Dendritic cell treated with granulocyte-macrophage colony-stimulating factor and Interleukin-4, amounts not matched to agents 40 ng/mL and 50 ng/mL, for 4 days (primary cell): ENCODE measurements at regions of chr14 and their contacts with region 1.

Region 1: GRCh38 chr14:45083971-45084722 is at the start of gene PRPF39:
- H3K4me3 Mint-ChIP-seq: peak within 1 kb of the TSS; percentile 97
- H3K27ac Mint-ChIP-seq: peak within 1 kb of the TSS; percentile 96
- H3K4me1 Mint-ChIP-seq: peaks cover 39% of the 10 kb centered on the region
- H3K27me3 Mint-ChIP-seq: peaks cover 9% of the 10 kb centered on the region

Region 2: GRCh38 chr14:44897045-44897844 is 186.9 kb before region 1 on chr14:
- intact Hi-C with region 1: loop called (anchors 1 kb)
- H3K4me3 Mint-ChIP-seq: peak overlapping the region; percentile 93
- H3K27ac Mint-ChIP-seq: peak overlapping the region; percentile 93
- H3K4me1 Mint-ChIP-seq: peaks cover 14% of the 10 kb centered on the region
- H3K27me3 Mint-ChIP-seq: no peaks in the 10 kb centered on the region

Region 3: GRCh38 chr14:45112889-45113781 is 29.0 kb after region 1 on chr14:
- intact Hi-C with region 1: no loop called
- H3K4me3 Mint-ChIP-seq: no peak overlapping the region
- H3K27ac Mint-ChIP-seq: no peak overlapping the region
- H3K4me1 Mint-ChIP-seq: no peaks in the 10 kb centered on the region
- H3K27me3 Mint-ChIP-seq: no peaks in the 10 kb centered on the region

Region 4: DNA sequence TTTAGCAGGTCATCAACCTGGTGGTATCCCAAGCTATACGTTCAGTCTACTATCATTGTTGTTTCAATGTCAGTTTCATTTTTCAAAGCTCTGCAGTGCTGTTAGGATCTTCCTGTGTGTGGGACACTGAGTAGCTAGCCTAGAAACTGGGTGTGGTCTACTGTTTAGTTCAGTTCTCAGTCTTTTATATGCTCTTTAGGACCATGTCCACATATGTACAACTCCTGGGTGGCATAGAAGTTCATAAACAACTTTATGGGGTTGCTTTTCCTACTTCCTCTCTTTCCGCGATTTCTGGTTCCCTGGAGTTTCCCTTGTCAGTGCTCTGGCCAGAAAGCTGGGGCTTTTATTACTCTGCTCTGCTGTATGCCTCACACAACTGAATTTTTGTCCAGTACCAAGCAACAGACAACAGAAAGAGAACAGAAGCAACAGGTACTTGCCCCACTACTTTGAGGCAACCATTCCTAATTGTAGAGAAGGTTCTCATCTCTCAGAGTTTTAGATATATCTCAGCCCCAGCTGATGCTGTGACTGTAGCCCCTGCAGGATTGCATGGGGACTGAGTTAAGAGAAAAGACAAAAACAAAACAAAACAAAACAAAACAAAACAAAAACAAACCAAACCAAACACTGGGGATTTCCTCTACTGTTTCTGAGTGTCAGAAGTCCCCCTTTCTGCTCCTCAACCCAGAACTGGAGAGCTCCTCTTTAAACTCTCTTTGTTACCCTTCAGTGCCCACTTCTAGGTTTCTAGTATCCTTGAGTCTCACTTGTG is 138.5 kb after region 1 on chr14:
- intact Hi-C with region 1: no loop called
- H3K4me3 Mint-ChIP-seq: no peak overlapping the region
- H3K27ac Mint-ChIP-seq: peak overlapping the region; percentile 72
- H3K4me1 Mint-ChIP-seq: peaks cover 7% of the 10 kb centered on the region
- H3K27me3 Mint-ChIP-seq: no peaks in the 10 kb centered on the region